Mammary epithelial cell (primary cell): ENCODE measurements at regions of chrX and their contacts with region 1.

Region 1: DNA sequence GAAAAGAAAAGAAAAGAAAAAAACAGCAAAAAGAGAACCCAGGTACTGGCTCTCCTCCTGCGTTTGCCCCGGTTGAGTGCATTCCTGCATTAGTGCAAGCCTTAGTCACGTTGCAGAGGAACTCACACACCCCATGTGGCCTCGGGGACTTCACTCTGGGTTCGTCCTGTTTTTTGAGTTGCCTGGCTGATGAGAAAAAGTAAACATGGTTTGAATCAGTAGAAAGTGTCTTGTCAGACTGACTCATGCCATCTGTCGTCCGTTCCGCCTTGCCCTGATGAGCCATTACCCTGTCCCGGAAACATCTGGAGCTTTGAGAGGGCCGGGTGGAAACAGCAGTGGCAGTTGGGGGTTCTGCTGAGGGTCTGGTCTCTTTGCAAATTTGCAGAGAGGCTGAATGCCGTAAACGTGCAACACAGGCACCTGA is 16.3 kb downstream of the CD99 start:
- DNase-seq: peak; percentile 98
- H3K4me3 ChIP-seq: no peak overlapping the region
- H3K27ac ChIP-seq: peak overlapping the region; percentile 90
- H3K4me1 ChIP-seq: peaks cover 35% of the 10 kb centered on the region
- H3K27me3 ChIP-seq: no peaks in the 10 kb centered on the region
- CTCF ChIP-seq: no peak

Region 2: GRCh38 chrX:2690856-2691542 is 16.3 kb before region 1 on chrX and contains the start of gene CD99:
- CTCF ChIA-PET with region 1: no interaction called
- dilution Hi-C with region 1: no loop called
- in situ Hi-C with region 1: no loop called
- intact Hi-C with region 1: loop called (anchors 1 kb)
- DNase-seq: peak; percentile 77
- H3K4me3 ChIP-seq: peak within 1 kb of the TSS; percentile 58 to 76 (median 71)
- H3K27ac ChIP-seq: peak within 1 kb of the TSS; percentile 72
- H3K4me1 ChIP-seq: peaks cover 2% of the 10 kb centered on the region
- H3K27me3 ChIP-seq: no peaks in the 10 kb centered on the region
- CTCF ChIP-seq: no peak
- total RNA-seq, gene CD99: 27.0 to 66.4 TPM

Region 3: DNA sequence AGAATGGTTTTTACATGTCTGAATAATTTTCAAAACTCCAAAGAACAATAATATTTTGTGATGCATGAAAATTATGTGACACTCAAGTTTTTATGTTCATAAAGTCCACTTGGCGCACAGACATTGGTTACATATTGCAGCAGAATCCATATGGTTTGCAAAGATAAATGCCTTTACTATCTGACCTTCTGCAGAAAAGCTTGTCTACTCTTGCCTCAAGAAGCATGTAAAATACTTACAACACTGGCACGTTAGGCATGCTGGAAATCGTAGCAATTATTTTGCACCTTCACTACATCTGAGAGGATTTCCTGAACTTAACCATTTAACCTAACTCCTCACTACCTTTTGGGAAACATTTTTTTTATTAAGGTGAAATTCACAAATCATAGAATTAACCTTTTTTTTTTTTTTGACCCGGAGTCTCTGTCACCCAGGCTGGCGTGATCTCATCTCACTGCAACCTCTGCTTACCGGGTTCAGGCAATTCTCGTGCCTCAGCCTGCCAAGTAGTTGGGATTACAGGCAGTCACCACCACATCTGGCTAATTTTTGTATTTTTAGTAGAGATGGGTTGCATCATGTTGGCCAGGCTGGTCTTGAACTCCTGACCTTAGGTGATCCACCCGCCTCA is 41.0 kb after region 1 on chrX:
- CTCF ChIA-PET with region 1: no interaction called
- dilution Hi-C with region 1: no loop called
- in situ Hi-C with region 1: no loop called
- intact Hi-C with region 1: loop called (anchors 1 kb)
- DNase-seq: peak; percentile 45
- H3K4me3 ChIP-seq: no peak overlapping the region
- H3K27ac ChIP-seq: no peak overlapping the region
- H3K4me1 ChIP-seq: no peaks in the 10 kb centered on the region
- H3K27me3 ChIP-seq: no peaks in the 10 kb centered on the region
- CTCF ChIP-seq: no peak

Region 4: DNA sequence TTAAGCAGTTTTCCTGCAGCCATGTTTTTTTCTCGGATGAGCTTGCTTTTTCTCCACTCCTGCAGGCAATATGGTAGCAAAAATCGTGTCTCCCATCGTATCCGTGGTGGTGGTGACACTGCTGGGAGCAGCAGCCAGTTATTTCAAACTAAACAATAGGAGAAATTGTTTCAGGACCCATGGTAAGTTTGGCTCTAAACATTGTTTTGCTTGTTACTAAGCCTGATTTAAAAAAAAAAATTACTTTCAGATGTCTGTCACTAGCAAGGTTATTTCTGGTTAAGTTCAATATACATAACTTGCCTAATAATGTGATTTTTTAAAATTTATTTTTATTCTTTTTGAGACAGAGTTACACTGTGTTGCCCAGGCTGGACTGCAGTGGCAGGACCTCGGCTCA is 103.9 kb after region 1 on chrX:
- CTCF ChIA-PET with region 1: no interaction called
- dilution Hi-C with region 1: no loop called
- in situ Hi-C with region 1: no loop called
- intact Hi-C with region 1: loop called (anchors 1 kb)
- DNase-seq: no peak
- H3K4me3 ChIP-seq: no peak overlapping the region
- H3K27ac ChIP-seq: peak overlapping the region; percentile 64
- H3K4me1 ChIP-seq: no peaks in the 10 kb centered on the region
- H3K27me3 ChIP-seq: no peaks in the 10 kb centered on the region
- CTCF ChIP-seq: no peak

Region 5: DNA sequence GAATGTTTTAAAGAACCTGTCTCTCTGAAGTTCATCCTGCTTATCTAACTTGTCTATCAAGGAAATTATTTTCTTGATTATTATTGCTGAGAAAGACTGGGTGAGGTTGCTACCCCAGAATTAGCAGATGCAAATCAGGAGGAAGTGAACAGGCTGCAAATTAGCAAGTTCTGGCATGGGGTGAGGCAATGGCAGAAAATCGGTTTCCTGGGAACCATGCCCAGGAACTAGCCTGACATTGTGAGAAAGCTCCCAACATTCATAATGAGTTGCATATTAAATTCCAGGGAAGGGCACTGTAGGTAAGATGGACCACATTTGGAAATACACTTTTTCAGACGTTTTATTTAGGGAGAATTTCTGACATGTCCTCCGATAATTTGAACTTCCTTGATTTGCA is 345.5 kb after region 1 on chrX:
- CTCF ChIA-PET with region 1: no interaction called
- dilution Hi-C with region 1: no loop called
- in situ Hi-C with region 1: no loop called
- intact Hi-C with region 1: no loop called
- DNase-seq: no peak
- H3K4me3 ChIP-seq: no peak overlapping the region
- H3K27ac ChIP-seq: no peak overlapping the region
- H3K4me1 ChIP-seq: no peaks in the 10 kb centered on the region
- H3K27me3 ChIP-seq: no peaks in the 10 kb centered on the region
- CTCF ChIP-seq: no peak